ENCODE measurements at regions of chr5 and their contacts with region 1.

Region 1: GRCh38 chr5:141618804-141619554 is at the start of gene DIAPH1:
- DNase-seq: peak; percentile 99
- H3K4me3 ChIP-seq: peak within 1 kb of the TSS; percentile 72 to 82
- H3K27ac ChIP-seq: peak within 1 kb of the TSS; percentile 67 to 72
- H3K4me1 ChIP-seq: peaks cover 9 to 12% of the 10 kb centered on the region in 2 experiments; a peak in 2 of 4 replicates
- H3K27me3 ChIP-seq: no peaks in the 10 kb centered on the region
- CTCF ChIP-seq: peak; percentile 95
- EP300 ChIP-seq: peak; percentile 14 to 65; a peak in 2 of 4 replicates
- RAD21 ChIP-seq: peak; percentile 74
- polyA plus RNA-seq, gene DIAPH1: 28.2 and 30.4 TPM in 2 replicates

Region 2: GRCh38 chr5:141590127-141590526 is 28.9 kb before region 1 on chr5:
- CTCF ChIA-PET with region 1: interaction called, 280 read pairs
- POLR2A ChIA-PET with region 1: interaction called, 14 read pairs
- DNase-seq: no peak
- H3K4me3 ChIP-seq: no peak overlapping the region
- H3K27ac ChIP-seq: no peak overlapping the region
- H3K4me1 ChIP-seq: no peaks in the 10 kb centered on the region
- H3K27me3 ChIP-seq: no peaks in the 10 kb centered on the region
- CTCF ChIP-seq: no peak
- EP300 ChIP-seq: no peak
- RAD21 ChIP-seq: no peak

Region 3: DNA sequence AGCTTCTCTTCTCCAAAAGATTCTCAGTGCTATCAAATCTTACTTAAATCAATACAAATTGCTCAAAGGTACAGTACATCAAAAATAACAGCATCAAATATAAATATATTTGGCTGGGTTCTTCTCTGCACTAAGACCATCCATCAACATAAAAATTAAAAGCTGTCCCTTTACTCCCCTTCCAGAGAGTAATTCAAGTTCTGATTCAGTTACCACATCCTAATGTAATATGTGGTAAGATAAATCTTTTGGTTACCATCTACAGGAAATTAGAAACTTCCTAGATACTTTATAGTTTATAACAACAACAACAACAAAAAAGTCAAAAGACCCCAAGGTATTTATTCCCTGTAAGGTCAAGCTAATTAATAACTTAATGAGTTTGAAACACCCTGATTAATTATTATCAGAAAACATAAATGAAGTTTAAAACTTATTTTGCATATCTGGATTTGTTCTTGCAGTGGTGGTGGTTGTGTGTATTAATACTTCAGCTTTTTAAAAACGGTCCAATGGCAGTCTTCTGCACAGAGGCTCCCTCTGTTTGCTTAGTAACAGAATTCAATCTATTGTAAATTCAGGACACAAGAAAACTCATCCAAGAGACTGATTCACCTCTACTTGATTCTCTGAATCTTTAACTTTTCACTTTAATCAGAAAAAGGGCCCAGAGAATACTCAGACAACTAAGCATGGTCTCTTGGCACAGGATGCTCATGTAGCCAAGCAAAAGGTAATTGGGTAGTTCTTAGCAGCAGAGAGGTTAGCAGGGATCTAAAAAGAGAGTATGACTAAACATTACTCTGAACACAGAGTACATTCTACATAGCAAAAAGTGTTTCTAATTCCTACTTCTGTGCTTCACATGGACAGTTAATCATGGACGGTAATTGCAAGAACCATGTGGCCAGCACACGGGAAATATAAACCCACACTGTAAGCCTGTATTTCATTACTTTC is 20.3 kb before region 1 on chr5:
- CTCF ChIA-PET with region 1: interaction called, 280 read pairs
- POLR2A ChIA-PET with region 1: no interaction called
- DNase-seq: no peak
- H3K4me3 ChIP-seq: no peak overlapping the region
- H3K27ac ChIP-seq: peak overlapping the region in 1 of 2 experiments; percentile 9; a peak in 1 of 4 replicates
- H3K4me1 ChIP-seq: peaks cover 0 to 5% of the 10 kb centered on the region in 2 experiments; a peak in 1 of 4 replicates
- H3K27me3 ChIP-seq: no peaks in the 10 kb centered on the region
- CTCF ChIP-seq: no peak
- EP300 ChIP-seq: no peak
- RAD21 ChIP-seq: no peak

Region 4: GRCh38 chr5:141605523-141606277 is 13.3 kb before region 1 on chr5:
- CTCF ChIA-PET with region 1: interaction called, 47 read pairs
- POLR2A ChIA-PET with region 1: no interaction called
- DNase-seq: no peak
- H3K4me3 ChIP-seq: no peak overlapping the region
- H3K27ac ChIP-seq: peak overlapping the region in 1 of 2 experiments; percentile 69; a peak in 2 of 4 replicates
- H3K4me1 ChIP-seq: peaks cover 0 to 8% of the 10 kb centered on the region in 2 experiments; a peak in 2 of 4 replicates
- H3K27me3 ChIP-seq: no peaks in the 10 kb centered on the region
- CTCF ChIP-seq: no peak
- EP300 ChIP-seq: no peak
- RAD21 ChIP-seq: no peak

Region 5: DNA sequence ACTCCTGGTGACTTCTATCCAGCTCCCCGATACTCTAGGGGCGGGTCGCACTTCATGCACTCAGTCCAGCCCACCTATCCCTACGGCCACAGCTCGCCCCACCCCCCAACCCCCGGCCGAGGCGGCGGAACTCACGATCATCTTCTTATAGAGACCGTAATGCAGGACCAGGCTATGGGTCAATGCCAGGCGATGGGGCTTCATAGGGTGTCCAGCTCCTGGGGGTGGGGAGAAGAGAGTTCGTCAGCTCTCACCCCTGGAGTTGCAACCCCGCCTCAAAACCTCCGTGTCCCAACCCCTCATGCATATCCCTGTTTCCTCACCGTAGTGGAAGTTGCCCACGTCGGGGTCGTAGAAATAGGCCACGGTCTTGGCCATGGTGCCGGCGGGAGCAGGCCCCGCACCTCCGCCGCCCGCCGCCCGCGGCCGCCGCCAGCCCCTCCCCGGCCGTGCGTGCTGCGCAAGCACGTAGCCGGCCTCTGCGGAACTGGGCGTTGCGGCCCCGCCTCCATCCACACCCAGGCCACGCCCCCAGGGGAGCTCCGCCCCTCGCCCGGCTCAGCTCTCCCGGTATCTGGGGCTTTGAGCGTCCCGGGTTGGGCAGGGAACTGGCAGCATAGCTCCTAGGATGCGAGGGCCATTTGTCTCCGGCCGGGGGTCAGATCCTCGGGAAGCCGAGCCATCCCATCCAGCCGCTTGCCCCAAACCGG is 17.6 kb after region 1 on chr5 and contains the starts of genes HDAC3 and RELL2:
- CTCF ChIA-PET with region 1: interaction called, 207 read pairs
- POLR2A ChIA-PET with region 1: interaction called, 17 read pairs
- DNase-seq: peak; percentile 99
- H3K4me3 ChIP-seq: peak within 1 kb of the TSS; percentile 93 to 99
- H3K27ac ChIP-seq: peak within 1 kb of the TSS; percentile 66 to 89
- H3K4me1 ChIP-seq: peaks cover 5 to 28% of the 10 kb centered on the region in 2 experiments; a peak in 3 of 4 replicates
- H3K27me3 ChIP-seq: no peaks in the 10 kb centered on the region
- CTCF ChIP-seq: no peak
- EP300 ChIP-seq: no peak
- RAD21 ChIP-seq: no peak
- polyA plus RNA-seq, gene HDAC3: 104 and 115 TPM in 2 replicates
- polyA plus RNA-seq, gene RELL2: 15.6 and 16.1 TPM in 2 replicates

Region 6: DNA sequence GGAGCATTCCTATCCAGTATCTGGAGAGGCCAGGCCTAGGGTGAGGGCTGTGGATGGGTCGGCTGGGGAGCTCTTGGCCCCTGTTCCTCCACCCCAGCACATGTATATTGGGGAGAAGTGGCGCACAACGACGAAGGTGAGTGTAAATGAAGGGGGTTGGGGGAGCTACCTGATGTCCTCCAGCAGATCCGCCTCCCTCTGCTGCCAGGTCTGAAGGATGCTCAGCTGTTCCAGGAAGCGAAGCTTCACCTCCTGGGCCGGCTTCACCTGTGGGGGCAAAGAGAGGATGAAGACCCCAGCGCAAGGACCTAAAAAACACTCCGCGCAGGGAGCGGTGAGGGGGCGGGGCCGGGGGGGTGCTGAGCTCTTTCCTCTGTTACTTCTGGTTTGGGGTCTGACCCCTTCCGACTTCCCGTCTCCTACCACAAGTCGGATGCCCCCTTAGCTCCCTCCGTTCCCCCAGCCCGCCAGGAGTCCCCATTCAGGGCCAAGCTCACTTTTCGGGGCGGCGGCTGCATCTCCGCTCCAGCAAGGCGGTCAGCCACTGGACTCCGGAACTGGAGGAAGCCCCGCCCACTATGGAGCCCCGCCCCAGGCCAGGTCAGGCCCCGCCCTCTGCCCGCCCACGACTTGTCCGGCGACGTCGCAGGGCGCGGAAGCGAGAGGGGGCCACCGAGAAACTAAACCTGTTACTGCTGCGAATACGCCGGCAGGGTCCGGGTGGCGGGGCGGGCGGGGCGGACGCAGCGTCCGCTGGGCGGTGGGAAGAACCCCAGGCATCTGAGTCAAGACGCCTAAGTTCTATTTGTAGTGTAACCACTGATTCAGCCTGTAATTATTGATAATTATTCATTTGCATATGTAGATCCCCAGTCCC is 32.1 kb after region 1 on chr5 and contains the start of gene FCHSD1:
- CTCF ChIA-PET with region 1: interaction called, 207 read pairs
- POLR2A ChIA-PET with region 1: interaction called, 3 read pairs
- DNase-seq: peak; percentile 99
- H3K4me3 ChIP-seq: peak within 1 kb of the TSS; percentile 74 to 83
- H3K27ac ChIP-seq: peak within 1 kb of the TSS in 1 of 2 experiments; percentile 45; a peak in 1 of 4 replicates
- H3K4me1 ChIP-seq: peaks cover 0 to 15% of the 10 kb centered on the region in 2 experiments; a peak in 1 of 4 replicates
- H3K27me3 ChIP-seq: no peaks in the 10 kb centered on the region
- CTCF ChIP-seq: no peak
- EP300 ChIP-seq: no peak
- RAD21 ChIP-seq: no peak
- polyA plus RNA-seq, gene FCHSD1: 49.2 and 58.3 TPM in 2 replicates

Measured in SK-N-SH (cell line).